ENCODE measurements at regions of chr5 and their contacts with region 1.

Region 1: DNA sequence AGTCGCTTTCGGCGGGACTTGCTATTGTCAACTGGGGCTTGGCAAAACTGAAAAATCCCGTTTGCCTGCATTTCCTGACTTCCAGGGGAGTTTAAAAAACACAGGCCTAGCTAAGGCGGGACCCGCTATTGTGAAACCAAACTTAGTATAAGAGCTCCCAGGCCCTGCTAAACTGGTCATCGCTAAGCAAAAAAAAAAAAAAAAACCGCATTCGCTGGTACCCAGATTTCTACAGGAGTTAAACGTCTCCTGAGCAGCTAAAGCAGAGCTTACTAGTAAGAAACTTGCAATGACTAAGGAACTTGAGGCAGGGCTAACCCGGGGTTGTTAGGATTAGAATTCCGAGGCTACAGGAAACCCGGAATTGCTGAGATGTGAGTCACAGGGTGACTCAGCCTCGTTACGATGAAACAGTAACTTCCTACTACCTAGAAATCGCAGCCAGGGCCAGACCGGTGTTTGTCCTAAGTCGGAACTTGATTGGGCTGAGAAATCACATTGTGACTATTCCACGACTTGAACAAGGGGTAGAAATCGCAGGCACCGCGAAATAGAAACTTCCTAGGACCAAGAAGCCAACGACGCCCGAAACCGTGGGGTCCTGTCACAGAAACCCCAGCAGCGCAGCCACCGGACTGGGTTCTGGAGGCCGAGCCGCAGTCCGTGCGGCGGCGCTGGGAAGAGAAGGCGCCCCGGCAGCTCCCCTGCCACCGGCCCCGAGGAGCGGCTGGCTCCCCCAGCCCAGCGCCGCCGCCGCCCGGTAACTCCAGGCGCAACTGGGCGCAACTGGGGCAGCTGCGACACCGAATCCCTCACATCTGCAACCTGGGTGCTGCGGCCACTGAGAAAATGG is 89.5 kb downstream of the ANXA2R start:
- DNase-seq: peak; percentile 66 to 85
- ATAC-seq: peak; percentile 38 to 66 (median 53)
- H3K4me3 ChIP-seq: peak overlapping the region; percentile 73
- H3K4me3 Mint-ChIP-seq: peak overlapping the region; percentile 88
- H3K27ac ChIP-seq: peak overlapping the region; percentile 98
- H3K27ac Mint-ChIP-seq: peak overlapping the region; percentile 97 to 99
- H3K4me1 ChIP-seq: peaks cover 45% of the 10 kb centered on the region
- H3K4me1 Mint-ChIP-seq: peaks cover 33 to 44% of the 10 kb centered on the region in 2 donors
- H3K27me3 ChIP-seq: no peaks in the 10 kb centered on the region
- H3K27me3 Mint-ChIP-seq: no peaks in the 10 kb centered on the region
- CTCF ChIP-seq: no peak

Region 2: DNA sequence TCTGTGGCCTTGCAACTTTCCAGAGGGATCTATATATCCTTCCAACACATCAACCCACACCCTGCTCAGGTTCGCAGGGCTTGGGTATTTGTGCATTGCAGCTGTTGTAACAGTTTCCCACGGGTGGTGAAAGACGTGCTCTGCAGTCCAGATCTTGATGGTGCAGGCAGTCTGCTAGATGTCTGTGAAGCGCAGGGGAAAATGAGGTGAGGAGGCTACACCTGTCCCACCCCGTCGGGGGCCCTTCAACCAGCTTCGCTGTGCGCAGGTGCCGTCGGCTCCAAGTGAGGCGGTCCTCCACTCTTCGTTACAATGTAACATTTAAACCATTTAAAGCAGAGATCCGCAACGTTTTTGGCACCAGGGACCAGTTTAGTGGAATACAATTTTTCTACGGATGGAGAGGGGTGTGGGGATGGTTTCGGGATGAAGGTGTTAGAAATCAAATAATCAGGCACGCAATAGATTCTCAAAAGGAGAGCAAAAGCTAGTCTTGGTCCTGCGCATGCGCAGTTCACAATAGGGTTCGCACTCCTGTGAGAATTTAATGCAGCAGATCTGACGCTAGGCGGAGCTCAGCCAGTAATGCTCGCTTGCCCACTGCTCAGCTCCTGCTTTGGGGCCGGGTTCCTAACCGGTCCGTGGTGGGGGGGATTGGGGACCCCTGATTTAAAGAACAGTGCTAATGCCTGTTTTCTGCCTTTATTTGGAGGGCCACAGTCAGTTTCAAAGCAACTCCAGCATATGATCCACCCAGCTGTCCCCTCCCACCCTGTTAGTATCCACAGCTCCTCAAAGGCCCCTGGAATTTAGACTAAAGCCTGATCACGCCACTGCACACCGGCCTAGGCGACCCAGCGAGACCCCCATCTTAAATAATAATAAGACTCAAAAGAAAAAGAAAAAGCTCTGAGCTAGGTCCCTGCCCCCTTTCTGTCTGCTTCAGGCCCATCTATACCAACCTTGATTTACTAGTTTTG is 41.9 kb before region 1 on chr5:
- intact Hi-C with region 1: loop called (anchors 2 kb)
- DNase-seq: peak; percentile 83 to 98
- ATAC-seq: peak; percentile 84 to 95 (median 93)
- H3K4me3 ChIP-seq: peak overlapping the region; percentile 67
- H3K4me3 Mint-ChIP-seq: peak overlapping the region; percentile 96
- H3K27ac ChIP-seq: peak overlapping the region; percentile 41
- H3K27ac Mint-ChIP-seq: peak overlapping the region; percentile 86 to 90
- H3K4me1 ChIP-seq: peaks cover 8% of the 10 kb centered on the region
- H3K4me1 Mint-ChIP-seq: peaks cover 8 to 14% of the 10 kb centered on the region in 2 donors
- H3K27me3 ChIP-seq: no peaks in the 10 kb centered on the region
- H3K27me3 Mint-ChIP-seq: peaks cover 15 to 26% of the 10 kb centered on the region in 2 donors
- CTCF ChIP-seq: peak; percentile 81

Region 3: GRCh38 chr5:42962124-42962523 is 11.5 kb after region 1 on chr5:
- intact Hi-C with region 1: no loop called
- DNase-seq: peak in 1 of 2 donors; percentile 56
- ATAC-seq: peak; percentile 71 to 85 (median 79)
- H3K4me3 ChIP-seq: no peak overlapping the region
- H3K4me3 Mint-ChIP-seq: peak overlapping the region; percentile 83
- H3K27ac ChIP-seq: peak overlapping the region; percentile 70
- H3K27ac Mint-ChIP-seq: peak overlapping the region; percentile 71 to 94
- H3K4me1 ChIP-seq: peaks cover 25% of the 10 kb centered on the region
- H3K4me1 Mint-ChIP-seq: peaks cover 26 to 52% of the 10 kb centered on the region in 2 donors
- H3K27me3 ChIP-seq: no peaks in the 10 kb centered on the region
- H3K27me3 Mint-ChIP-seq: peaks cover 0 to 6% of the 10 kb centered on the region in 2 donors
- CTCF ChIP-seq: no peak

Region 4: DNA sequence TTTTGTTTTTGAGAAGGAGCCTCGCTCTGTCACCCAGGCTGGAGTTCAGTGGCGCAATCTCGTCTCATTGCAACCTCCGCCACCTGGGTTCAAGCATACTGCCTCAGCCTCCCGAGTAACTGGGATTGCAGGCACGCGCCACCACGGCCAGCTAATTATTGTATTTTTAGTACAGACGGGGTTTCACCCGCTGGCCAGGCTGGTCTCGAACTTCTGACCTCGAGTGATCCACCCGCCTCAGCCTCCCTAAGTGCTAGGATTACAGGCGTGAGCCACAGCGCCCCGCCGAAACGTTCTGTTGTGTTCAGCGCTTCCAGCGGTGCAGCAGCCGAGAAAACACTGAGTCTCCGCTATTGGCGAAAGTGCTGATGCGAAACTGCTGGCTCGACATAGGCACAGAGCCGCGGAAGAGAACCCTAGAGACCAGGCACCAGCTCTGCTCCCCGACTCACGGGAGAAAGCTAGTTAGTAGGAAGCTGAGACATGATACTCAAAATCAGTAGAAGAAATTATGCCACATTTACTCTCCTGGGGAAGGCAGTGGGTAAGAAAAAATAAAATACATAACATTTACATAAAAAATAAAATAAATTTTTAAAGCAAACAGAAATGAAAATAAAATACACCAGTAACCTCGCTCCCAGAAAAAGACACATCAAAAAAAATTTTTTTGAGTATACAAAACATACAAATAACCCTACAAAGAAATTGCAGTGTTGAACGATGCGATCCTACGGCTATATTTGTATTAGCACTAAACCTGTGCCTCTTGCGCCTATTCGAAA is 57.9 kb after region 1 on chr5:
- intact Hi-C with region 1: loop called (anchors 2 kb)
- DNase-seq: peak; percentile 82 to 97
- ATAC-seq: peak; percentile 61 to 79 (median 65)
- H3K4me3 ChIP-seq: peak overlapping the region; percentile 81
- H3K4me3 Mint-ChIP-seq: peak overlapping the region; percentile 89
- H3K27ac ChIP-seq: peak overlapping the region; percentile 88
- H3K27ac Mint-ChIP-seq: peak overlapping the region; percentile 99 to 100
- H3K4me1 ChIP-seq: peaks cover 36% of the 10 kb centered on the region
- H3K4me1 Mint-ChIP-seq: peaks cover 27 to 49% of the 10 kb centered on the region in 2 donors
- H3K27me3 ChIP-seq: no peaks in the 10 kb centered on the region
- H3K27me3 Mint-ChIP-seq: no peaks in the 10 kb centered on the region
- CTCF ChIP-seq: no peak

Region 5: GRCh38 chr5:43040287-43041098 is 89.8 kb after region 1 on chr5 and contains the start of gene ANXA2R:
- intact Hi-C with region 1: loop called (anchors 1 kb)
- DNase-seq: peak; percentile 83 to 98
- ATAC-seq: peak; percentile 54 to 73 (median 56)
- H3K4me3 ChIP-seq: peak within 1 kb of the TSS; percentile 74
- H3K4me3 Mint-ChIP-seq: peak within 1 kb of the TSS; percentile 93
- H3K27ac ChIP-seq: peak within 1 kb of the TSS; percentile 98
- H3K27ac Mint-ChIP-seq: peak within 1 kb of the TSS; percentile 92 to 96
- H3K4me1 ChIP-seq: peaks cover 61% of the 10 kb centered on the region
- H3K4me1 Mint-ChIP-seq: peaks cover 74 to 83% of the 10 kb centered on the region in 2 donors
- H3K27me3 ChIP-seq: no peaks in the 10 kb centered on the region
- H3K27me3 Mint-ChIP-seq: no peaks in the 10 kb centered on the region
- CTCF ChIP-seq: peak; percentile 72
- total RNA-seq, gene ANXA2R: 34.3 to 55.2 (median 38.0) TPM

Region 6: DNA sequence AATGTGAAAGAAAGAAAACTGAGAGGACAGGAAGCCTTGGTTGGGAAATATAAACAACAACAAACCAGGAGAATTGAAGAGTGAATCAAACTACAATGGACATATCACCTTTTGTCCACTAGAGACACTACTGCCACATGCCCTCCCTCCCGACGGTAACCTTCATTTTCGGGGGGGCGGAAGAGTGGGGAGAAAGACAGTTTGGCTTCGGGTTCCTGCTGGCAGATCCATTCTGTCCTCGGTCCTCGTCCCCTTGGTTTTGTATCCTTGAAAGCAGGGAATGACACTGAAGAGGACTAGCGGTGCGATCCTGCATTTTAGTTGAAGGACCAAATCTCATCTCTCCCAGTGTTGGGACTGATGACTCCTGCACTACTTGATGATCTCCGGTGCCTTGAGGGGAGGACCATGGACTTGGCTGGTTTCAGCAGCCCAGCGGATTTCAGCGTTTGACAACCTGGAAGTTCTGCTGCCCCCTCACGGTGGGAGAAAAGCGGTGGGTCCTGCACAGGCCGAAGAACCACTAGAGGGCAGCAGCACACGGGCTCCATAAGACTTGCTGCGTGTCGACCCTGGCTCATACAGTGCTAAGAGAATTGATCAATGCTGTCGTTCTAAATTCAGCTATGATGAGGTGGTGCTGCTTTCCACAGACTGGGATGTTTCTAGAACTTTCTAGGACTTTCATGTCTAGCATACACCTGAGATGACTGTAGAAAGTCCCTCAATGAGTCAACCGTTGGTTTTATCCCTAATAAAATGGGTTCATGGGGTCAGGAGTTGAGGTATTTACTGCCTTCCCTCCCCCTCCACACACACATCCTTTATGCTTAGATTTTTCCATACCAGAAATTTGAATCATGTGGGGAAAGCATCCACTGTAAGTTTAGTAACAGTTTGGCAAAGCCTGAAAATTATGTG is 155.0 kb after region 1 on chr5:
- intact Hi-C with region 1: loop called (anchors 1 kb)
- DNase-seq: peak; percentile 87 to 98
- ATAC-seq: peak; percentile 92 to 99 (median 94)
- H3K4me3 ChIP-seq: peak overlapping the region; percentile 35
- H3K4me3 Mint-ChIP-seq: peak overlapping the region; percentile 88
- H3K27ac ChIP-seq: peak overlapping the region; percentile 64
- H3K27ac Mint-ChIP-seq: peak overlapping the region; percentile 87 to 91
- H3K4me1 ChIP-seq: peaks cover 16% of the 10 kb centered on the region
- H3K4me1 Mint-ChIP-seq: peaks cover 12 to 25% of the 10 kb centered on the region in 2 donors
- H3K27me3 ChIP-seq: no peaks in the 10 kb centered on the region
- H3K27me3 Mint-ChIP-seq: no peaks in the 10 kb centered on the region
- CTCF ChIP-seq: peak; percentile 100

Region 7: GRCh38 chr5:43313035-43313853 is 362.6 kb after region 1 on chr5 and contains the start of gene HMGCS1:
- intact Hi-C with region 1: loop called (anchors 1 kb)
- DNase-seq: peak; percentile 99
- ATAC-seq: peak; percentile 86 to 95 (median 86)
- H3K4me3 ChIP-seq: peak within 1 kb of the TSS; percentile 82
- H3K4me3 Mint-ChIP-seq: peak within 1 kb of the TSS; percentile 94
- H3K27ac ChIP-seq: peak within 1 kb of the TSS; percentile 98
- H3K27ac Mint-ChIP-seq: peak within 1 kb of the TSS; percentile 98 to 99
- H3K4me1 ChIP-seq: peaks cover 17% of the 10 kb centered on the region
- H3K4me1 Mint-ChIP-seq: peaks cover 32 to 37% of the 10 kb centered on the region in 2 donors
- H3K27me3 ChIP-seq: no peaks in the 10 kb centered on the region
- H3K27me3 Mint-ChIP-seq: peaks cover 0 to 3% of the 10 kb centered on the region in 2 donors
- CTCF ChIP-seq: no peak
- total RNA-seq, gene HMGCS1: 53.0 to 105 (median 85.8) TPM